ENCODE measurements at regions of chr9 and their contacts with region 1.

Region 1: GRCh38 chr9:37984672-37985611 is 81.0 kb upstream of the SLC25A51 start:
- DNase-seq: peak; percentile 55 to 76 (median 74)
- ATAC-seq: peak; percentile 83 to 90
- H3K4me3 ChIP-seq: no peak overlapping the region
- H3K27ac ChIP-seq: no peak overlapping the region
- H3K4me1 ChIP-seq: peaks cover 24% of the 10 kb centered on the region
- H3K27me3 ChIP-seq: no peaks in the 10 kb centered on the region

Region 2: DNA sequence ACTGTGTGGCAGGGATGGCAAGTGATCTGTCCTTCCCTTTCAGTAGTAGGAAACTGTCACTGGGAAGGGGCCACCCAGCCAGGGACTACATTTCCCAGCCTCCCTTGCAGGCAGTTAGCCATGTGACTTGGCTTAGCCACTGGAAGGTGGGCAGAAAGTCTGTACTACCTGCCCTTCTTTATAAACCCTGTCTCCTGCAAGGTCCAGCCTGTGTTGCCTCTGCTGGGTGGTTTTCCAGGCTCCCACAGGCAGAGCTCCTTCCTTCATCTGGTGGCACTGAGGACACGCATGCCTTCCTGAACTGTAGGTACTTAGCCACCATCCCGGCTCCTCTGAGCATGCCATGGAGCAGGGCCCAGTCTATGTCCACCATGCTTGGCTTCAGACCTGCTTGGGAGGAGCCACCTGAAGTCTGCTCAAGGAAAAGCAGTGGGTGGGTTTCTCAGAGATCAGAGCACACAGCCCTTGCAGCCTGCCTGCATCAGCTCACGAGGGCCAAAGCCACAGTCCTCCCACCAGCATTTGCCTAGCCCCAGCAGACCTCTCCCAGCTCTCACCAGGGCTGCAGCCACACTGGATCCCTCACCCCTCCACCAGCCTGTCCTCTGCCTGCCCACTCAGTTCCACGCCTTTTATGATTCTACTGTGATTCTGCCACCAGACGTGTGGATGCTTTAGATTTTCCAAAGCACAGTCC is 64.3 kb before region 1 on chr9:
- intact Hi-C with region 1: loop called in 1 of 4 experiments (anchors 5 kb)
- DNase-seq: no peak
- ATAC-seq: no peak
- H3K4me3 ChIP-seq: no peak overlapping the region
- H3K27ac ChIP-seq: no peak overlapping the region
- H3K4me1 ChIP-seq: no peaks in the 10 kb centered on the region
- H3K27me3 ChIP-seq: no peaks in the 10 kb centered on the region

Region 3: DNA sequence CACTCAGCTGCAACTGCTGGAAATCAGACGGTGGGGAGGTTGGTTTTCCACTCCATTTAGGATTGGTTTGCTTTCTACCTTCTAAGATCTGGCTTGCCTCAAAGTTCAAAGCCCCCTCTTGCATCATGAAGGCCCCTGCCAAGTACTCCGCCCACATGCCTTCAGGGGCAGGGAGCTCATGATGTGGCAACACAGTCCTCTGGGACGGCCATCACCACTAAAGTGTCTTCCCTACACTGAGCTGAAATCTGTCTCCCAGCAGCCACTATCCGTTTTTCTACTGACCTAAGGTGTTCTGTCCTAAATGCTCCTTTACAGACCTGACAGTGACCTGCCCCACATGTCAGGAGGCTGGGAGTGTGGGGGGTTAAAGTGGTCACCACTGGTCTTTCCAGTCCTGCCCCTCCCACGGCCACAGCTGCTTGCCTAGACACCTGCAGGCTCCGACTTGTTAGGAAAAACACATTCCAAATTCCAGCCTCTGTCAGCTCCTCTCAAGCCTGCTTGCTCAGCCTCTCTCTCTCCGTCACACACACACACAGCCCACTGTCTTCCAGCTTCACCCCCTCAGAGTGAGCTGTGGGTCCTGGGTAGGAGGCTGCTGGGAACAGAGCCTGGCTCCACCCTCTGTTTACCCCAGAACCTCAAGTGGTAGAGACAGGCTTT is 39.2 kb after region 1 on chr9:
- intact Hi-C with region 1: loop called in 1 of 4 experiments (anchors 2 kb)
- DNase-seq: peak in 1 of 3 donors; percentile 47
- ATAC-seq: peak; percentile 25 to 32
- H3K4me3 ChIP-seq: no peak overlapping the region
- H3K27ac ChIP-seq: no peak overlapping the region
- H3K4me1 ChIP-seq: peaks cover 38% of the 10 kb centered on the region
- H3K27me3 ChIP-seq: no peaks in the 10 kb centered on the region

Region 4: DNA sequence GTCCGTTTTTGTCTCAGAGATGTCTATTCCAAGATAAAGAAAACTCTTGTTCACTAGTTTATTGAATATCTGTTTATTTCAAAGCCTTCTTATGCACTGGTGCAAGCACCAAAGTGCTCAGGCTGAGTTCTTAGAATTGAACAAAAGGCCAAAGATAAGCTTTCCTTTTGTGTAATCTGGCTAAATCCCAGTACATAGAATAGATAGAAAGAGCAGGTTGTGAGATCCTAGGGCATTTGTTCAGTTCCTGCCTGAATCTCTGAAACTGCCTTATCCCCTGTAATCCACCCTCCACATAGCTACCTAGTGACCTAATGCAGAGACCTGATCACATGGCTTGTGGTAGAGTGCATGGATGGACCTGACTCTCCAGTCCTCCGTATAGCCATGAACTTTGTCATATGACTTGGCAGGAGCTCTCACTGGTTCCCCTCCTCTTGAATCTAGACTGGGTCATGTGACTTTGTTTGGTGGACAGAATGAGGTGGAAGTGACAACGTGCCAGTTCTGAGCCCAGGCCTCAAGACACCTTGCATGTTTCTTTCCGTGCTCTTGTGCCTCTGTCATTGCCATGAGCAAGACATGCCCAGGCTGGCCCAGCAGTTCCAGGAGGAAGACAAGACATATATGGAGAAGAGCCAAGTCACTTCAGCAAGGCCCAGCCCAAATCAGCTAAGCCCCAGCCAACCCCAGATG is 223.4 kb after region 1 on chr9:
- intact Hi-C with region 1: no loop called
- DNase-seq: no peak
- ATAC-seq: no peak
- H3K4me3 ChIP-seq: no peak overlapping the region
- H3K27ac ChIP-seq: no peak overlapping the region
- H3K4me1 ChIP-seq: no peaks in the 10 kb centered on the region
- H3K27me3 ChIP-seq: no peaks in the 10 kb centered on the region